ENCODE measurements at regions of chr2 and their contacts with region 1.

Region 1: DNA sequence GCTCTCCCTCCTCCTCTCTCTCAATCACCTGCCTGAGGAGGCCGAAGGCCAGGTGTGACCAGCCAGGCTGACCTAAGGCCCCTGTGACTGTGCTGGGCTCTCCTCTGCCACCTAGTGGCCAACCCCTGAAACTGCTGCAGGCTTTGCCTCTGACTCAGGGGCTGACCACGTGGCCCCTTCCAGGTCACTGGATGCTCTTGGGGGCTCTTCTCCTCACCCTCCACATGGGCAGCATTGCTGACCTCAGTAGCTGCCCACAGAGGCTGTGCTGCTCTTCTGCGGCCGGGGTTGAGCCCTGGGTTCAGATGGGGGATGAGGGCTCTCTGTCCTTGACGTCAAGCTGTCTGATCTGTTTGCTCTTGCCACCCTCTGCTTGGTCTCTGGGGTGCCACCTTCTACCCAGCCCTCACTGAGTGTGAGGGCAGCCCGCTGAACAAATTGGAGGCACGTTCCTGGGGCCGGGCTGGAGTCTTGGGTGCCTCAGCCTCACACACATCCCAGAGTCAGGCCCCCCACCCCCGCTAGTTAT is 122.7 kb downstream of the TWIST2 start:
- DNase-seq: no peak
- H3K4me3 ChIP-seq: no peak overlapping the region
- H3K27ac ChIP-seq: no peak overlapping the region
- H3K27me3 ChIP-seq: peaks cover 4% of the 10 kb centered on the region
- CTCF ChIP-seq: peak; percentile 99

Region 2: GRCh38 chr2:238644095-238645081 is 326.2 kb before region 1 on chr2:
- CTCF ChIA-PET with region 1: no interaction called
- POLR2A ChIA-PET with region 1: no interaction called
- DNase-seq: peak; percentile 30
- H3K4me3 ChIP-seq: no peak overlapping the region
- H3K27ac ChIP-seq: peak overlapping the region; percentile 81
- H3K27me3 ChIP-seq: no peaks in the 10 kb centered on the region
- CTCF ChIP-seq: no peak

Region 3: DNA sequence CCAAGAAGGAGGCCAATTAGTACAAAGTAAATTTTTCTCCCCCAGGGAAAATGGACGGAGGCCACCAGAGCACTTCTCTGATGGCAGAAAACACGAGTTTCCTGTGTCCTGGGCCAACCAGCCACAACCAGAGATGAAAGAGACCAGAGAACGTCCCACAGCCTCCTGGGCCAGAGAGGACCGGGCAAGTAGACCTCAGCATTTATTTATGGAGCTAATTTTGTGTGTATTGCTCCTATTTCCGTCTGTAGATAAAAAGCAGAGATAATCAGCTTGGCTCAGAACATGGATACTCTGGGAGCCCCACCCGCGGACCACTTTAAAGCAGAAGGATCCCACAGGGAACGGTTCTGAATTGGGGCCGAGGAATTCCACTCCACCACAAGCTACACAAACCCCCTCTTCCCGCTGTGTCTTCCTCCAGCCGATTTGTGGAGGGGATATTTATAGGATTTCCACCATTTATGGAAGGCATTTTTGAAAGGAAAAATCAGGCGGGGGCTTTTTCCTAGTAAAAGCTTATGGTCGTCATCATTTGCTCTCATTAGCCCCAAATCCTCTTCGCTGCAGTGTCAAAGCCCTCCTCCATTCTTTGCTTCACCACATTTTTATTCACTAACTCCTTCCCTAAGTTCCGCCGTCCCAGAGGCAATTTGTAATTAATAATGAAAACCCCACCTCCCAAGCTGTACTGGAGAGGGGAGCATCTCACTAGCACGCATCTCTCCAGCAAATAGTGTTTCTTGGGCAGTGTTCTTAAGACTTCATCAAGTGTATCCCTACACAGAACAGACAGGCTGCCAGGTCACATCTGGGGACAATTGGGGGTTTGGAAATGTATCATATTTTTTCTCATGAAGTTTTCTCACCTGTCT is 166.4 kb before region 1 on chr2:
- CTCF ChIA-PET with region 1: no interaction called
- POLR2A ChIA-PET with region 1: no interaction called
- DNase-seq: no peak
- H3K4me3 ChIP-seq: no peak overlapping the region
- H3K27ac ChIP-seq: no peak overlapping the region
- H3K27me3 ChIP-seq: peaks cover 19% of the 10 kb centered on the region
- CTCF ChIP-seq: no peak

Region 4: DNA sequence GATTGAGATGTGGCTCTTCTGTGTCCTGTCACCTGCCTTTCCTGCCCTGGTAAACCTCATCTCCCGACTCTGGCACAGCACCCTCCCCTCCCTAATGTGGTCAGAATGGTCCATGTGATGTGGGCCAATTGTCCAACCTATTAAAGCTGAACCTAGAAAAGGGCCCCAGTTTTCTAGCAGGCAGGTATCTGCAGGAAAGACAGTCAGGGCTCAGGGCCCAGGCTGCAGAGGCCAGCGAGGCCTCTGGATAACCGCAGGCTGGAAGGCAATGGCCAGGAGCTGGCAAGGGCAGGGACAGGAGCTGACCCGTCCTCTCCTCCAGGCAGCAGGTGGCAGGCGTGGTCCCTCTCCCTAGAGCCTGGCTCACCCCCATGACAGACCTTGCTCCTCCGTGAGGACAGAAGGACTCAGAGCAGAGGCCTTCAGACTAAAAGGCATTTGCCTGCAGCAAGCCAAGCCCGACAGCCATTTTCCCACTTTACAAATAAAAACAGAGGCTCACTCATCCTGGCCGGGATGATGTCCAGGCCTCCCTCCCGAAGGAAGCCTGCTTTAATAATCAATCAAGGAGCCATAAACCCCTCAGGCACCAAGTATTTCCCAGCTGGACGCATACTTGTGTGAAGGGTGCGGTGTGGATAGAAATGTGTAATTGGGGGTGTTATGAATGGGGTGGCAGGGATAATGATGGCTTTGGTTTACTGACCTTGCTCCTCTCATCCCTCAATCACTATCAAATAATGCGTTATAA is 15.6 kb before region 1 on chr2:
- CTCF ChIA-PET with region 1: interaction called, 13 read pairs
- POLR2A ChIA-PET with region 1: no interaction called
- DNase-seq: no peak
- H3K4me3 ChIP-seq: no peak overlapping the region
- H3K27ac ChIP-seq: no peak overlapping the region
- H3K27me3 ChIP-seq: no peaks in the 10 kb centered on the region
- CTCF ChIP-seq: no peak

Region 5: GRCh38 chr2:238985871-238986446 is 15.3 kb after region 1 on chr2:
- CTCF ChIA-PET with region 1: interaction called, 11 read pairs
- POLR2A ChIA-PET with region 1: no interaction called
- DNase-seq: no peak
- H3K4me3 ChIP-seq: no peak overlapping the region
- H3K27ac ChIP-seq: no peak overlapping the region
- H3K27me3 ChIP-seq: peaks cover 39% of the 10 kb centered on the region
- CTCF ChIP-seq: no peak

Region 6: DNA sequence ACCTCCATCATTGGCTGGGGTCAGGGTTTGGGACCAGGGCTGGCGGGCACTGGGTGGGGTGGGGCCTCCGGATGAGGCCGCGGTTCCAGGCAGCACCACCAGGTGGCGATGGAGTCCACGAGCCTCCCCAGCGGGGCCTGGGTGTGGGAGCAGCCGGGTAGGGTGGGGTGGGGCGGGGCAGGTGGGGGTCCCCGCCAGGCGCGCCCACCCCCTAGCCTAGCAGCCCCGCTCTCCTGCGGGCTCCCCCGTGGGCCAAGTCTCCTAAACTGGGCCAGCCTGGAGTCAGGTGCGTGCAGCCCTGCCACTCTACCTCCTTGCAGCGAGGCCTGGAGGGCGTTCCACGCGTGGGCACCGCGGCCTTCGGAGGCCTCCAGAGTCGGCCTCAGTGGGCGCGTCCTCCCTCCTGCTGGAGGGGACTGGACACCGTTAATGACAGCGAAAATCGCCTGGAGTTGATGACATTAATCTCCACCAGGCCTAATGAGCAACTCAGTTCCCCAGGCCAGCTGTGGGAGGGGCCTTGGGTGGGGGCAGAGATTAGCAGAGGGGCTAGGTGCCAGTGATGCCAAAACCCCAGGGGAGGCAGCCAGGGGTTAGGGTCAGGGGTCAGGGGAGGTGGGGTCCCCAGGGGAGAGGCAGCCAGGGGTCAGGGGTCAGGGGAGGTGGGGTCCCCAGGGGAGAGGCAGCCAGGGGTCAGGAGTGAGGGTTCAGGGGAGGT is 64.9 kb after region 1 on chr2:
- CTCF ChIA-PET with region 1: no interaction called
- POLR2A ChIA-PET with region 1: no interaction called
- DNase-seq: no peak
- H3K4me3 ChIP-seq: no peak overlapping the region
- H3K27ac ChIP-seq: no peak overlapping the region
- H3K27me3 ChIP-seq: peaks cover 4% of the 10 kb centered on the region
- CTCF ChIP-seq: peak; percentile 72

Region 7: GRCh38 chr2:239121600-239122012 is 151.0 kb after region 1 on chr2:
- CTCF ChIA-PET with region 1: no interaction called
- POLR2A ChIA-PET with region 1: no interaction called
- DNase-seq: no peak
- H3K4me3 ChIP-seq: no peak overlapping the region
- H3K27ac ChIP-seq: no peak overlapping the region
- H3K27me3 ChIP-seq: no peaks in the 10 kb centered on the region
- CTCF ChIP-seq: no peak